ENCODE measurements at regions of chr2 and their contacts with region 1.

Region 1: DNA sequence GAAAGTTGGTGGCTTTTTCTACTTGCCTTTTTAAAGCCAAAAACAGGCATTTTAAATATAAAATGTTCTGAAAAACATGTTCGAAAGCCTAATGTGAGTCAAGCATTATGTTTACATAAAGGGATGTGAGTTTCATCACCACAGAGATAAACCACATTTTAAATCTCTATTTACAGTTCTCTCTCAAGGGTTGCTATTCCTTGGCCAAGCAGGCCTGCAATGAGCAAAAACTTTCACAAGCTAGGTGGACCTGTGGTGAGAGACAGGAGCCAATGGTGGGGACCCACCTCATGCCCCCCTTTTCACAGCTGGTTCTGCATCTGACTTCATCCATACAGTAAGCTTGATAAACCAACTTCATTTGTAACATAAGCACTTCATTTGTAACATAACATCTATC is 65.1 kb downstream of the CUL3 start:
- DNase-seq: no peak
- ATAC-seq: no peak
- H3K4me3 Mint-ChIP-seq: peak overlapping the region; percentile 68
- H3K27ac Mint-ChIP-seq: peak overlapping the region; percentile 96
- H3K4me1 Mint-ChIP-seq: peaks cover 89% of the 10 kb centered on the region
- H3K27me3 Mint-ChIP-seq: no peaks in the 10 kb centered on the region
- CTCF ChIP-seq: no peak

Region 2: GRCh38 chr2:224442071-224442967 is 77.7 kb before region 1 on chr2:
- CTCF ChIA-PET with region 1: no interaction called
- POLR2A ChIA-PET with region 1: no interaction called
- intact Hi-C with region 1: no loop called
- DNase-seq: peak; percentile 27
- ATAC-seq: peak; percentile 78
- H3K4me3 Mint-ChIP-seq: peak overlapping the region; percentile 83
- H3K27ac Mint-ChIP-seq: peak overlapping the region; percentile 37
- H3K4me1 Mint-ChIP-seq: peaks cover 12% of the 10 kb centered on the region
- H3K27me3 Mint-ChIP-seq: peaks cover 23% of the 10 kb centered on the region
- CTCF ChIP-seq: no peak

Region 3: DNA sequence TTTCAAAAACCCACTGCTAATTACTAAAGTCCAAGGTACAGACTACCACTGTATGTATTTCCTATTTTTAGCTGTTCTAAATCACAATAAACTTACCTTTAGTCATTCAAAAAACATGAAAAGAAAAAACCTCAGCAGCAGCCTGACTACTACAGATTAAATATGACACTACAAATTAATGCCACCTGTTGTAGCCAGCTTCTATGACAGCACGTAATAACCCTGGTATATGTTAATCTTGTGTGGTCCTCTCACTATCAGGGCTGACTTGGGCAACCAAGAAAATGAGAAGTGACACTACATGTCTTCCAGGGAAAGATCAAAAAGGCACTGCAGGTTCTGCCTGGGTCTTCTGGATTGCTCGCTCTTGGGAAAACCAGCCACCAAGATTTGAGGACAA is 27.5 kb before region 1 on chr2:
- CTCF ChIA-PET with region 1: no interaction called
- POLR2A ChIA-PET with region 1: interaction called, 10 read pairs
- intact Hi-C with region 1: loop called (anchors 5 kb)
- DNase-seq: no peak
- ATAC-seq: no peak
- H3K4me3 Mint-ChIP-seq: no peak overlapping the region
- H3K27ac Mint-ChIP-seq: peak overlapping the region; percentile 46
- H3K4me1 Mint-ChIP-seq: peaks cover 45% of the 10 kb centered on the region
- H3K27me3 Mint-ChIP-seq: no peaks in the 10 kb centered on the region
- CTCF ChIP-seq: no peak

Region 4: DNA sequence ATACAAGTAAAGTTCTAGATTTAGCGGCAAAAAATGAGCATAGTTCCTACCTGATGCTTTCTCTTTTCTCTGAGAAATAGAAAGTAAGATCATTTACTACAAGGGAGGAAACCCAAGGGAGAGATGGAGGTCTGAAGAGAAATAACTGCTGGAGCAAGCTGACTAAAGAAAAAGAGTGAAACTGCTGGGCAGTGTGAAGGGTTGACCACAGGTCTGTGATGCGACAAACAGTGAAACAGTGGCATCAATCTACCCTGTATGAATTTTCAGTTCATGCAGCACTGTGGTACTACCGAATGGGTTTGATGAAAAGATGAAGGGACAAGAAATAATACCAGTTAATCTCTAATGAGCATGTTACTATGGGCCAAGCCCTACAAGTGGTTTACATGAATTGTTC is 12.9 kb after region 1 on chr2:
- CTCF ChIA-PET with region 1: interaction called, 3 read pairs
- POLR2A ChIA-PET with region 1: interaction called, 5 read pairs
- intact Hi-C with region 1: loop called (anchors 1 kb)
- DNase-seq: no peak
- ATAC-seq: no peak
- H3K4me3 Mint-ChIP-seq: no peak overlapping the region
- H3K27ac Mint-ChIP-seq: peak overlapping the region; percentile 60
- H3K4me1 Mint-ChIP-seq: peaks cover 52% of the 10 kb centered on the region
- H3K27me3 Mint-ChIP-seq: no peaks in the 10 kb centered on the region
- CTCF ChIP-seq: no peak

Region 5: DNA sequence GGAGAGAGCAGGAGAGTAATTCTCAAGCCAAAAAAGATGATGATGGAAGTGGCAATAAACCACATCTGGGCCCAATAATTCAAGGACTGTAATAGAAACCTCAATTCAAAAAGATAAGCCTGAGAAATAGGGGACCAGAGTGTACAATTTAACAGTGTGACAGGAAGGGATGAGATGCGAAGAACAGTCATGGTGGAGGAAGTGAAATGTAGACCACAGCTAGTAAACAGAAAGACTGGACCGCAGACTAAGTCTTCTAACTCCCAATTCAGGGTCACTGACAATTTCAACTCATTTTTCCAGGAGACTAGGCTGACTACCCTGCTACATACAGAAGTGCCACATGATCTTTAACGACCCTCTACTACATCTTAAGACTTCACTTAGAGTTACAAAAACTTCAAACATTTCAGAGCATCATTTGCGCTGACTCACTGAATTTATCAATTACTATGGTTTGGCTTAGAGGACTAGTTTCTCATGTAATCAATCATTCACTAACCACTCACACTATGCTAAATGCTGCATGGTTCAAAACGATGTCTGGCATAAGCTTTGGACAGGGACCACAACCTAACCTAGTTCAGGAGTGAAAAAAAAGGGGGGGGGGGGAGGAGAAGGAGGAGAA is 56.1 kb after region 1 on chr2:
- CTCF ChIA-PET with region 1: no interaction called
- POLR2A ChIA-PET with region 1: interaction called, 14 read pairs
- intact Hi-C with region 1: no loop called
- DNase-seq: no peak
- ATAC-seq: peak; percentile 51
- H3K4me3 Mint-ChIP-seq: peak overlapping the region; percentile 52
- H3K27ac Mint-ChIP-seq: peak overlapping the region; percentile 9
- H3K4me1 Mint-ChIP-seq: peaks cover 93% of the 10 kb centered on the region
- H3K27me3 Mint-ChIP-seq: no peaks in the 10 kb centered on the region
- CTCF ChIP-seq: no peak

Region 6: DNA sequence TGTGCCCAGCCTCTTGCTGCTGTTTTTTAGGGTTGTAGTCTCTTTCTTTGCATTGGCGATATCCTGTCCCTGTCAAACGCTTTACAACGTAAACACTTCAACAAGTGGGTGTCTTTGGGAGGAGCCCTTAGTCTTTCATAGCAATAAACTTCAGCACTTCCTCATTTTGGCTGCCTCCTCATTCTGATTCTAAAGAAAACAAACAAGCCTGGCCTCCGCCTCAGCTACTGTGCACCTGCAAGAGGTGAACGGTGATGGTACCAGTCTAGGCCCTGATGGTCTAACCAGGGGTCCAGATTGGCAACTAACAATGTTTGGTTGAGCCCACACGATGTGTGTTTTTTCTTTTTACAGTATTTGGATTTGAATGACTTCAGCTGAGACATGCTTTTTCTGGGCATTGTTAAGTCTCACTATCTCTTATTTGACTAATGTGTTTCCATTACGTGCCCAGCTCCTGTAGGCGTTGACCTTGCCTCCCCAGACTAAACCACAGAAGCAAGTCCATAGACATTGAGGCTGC is 118.3 kb after region 1 on chr2:
- CTCF ChIA-PET with region 1: no interaction called
- POLR2A ChIA-PET with region 1: interaction called, 4 read pairs
- intact Hi-C with region 1: loop called (anchors 5 kb)
- DNase-seq: peak; percentile 30
- ATAC-seq: peak; percentile 85
- H3K4me3 Mint-ChIP-seq: peak overlapping the region; percentile 42
- H3K27ac Mint-ChIP-seq: peak overlapping the region; percentile 91
- H3K4me1 Mint-ChIP-seq: peaks cover 18% of the 10 kb centered on the region
- H3K27me3 Mint-ChIP-seq: no peaks in the 10 kb centered on the region
- CTCF ChIP-seq: no peak